ENCODE measurements at regions of chr4 and their contacts with region 1.

Region 1: DNA sequence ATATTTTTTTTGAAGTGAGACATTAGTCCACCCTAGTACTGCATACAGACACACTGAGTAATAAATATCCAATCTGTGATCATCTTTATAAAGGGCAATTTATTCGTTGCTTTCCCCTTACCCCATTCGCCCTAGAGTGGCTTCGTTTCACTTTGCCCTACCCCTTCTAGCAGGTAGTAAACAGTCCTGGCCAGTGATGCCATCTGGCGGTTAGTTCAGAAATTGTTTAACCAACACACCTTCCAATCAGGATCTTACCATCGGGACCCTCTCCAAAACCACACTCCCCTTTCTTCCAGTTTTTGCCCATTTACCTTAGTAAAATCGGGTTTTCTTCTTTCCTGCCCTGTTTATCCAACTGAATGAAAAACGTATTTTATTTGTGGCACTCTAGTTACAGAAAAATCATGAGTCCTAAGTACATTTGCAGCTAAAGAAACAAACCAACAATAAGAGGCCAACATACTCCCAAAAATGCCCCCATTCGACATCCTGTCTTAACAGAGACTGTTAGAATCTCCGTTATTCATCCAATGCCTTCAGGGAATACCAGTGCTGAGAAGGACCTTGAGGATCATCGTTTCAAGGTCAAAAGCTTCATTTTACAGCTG is 2.2 kb downstream of the PPA2 start:
- DNase-seq: peak; percentile 30 to 50
- ATAC-seq: peak; percentile 47 to 62 (median 54)
- H3K4me3 ChIP-seq: peak overlapping the region; percentile 85
- H3K27ac ChIP-seq: peak overlapping the region; percentile 94
- H3K4me1 ChIP-seq: peaks cover 19% of the 10 kb centered on the region
- H3K27me3 ChIP-seq: no peaks in the 10 kb centered on the region
- CTCF ChIP-seq: peak; percentile 74

Region 2: GRCh38 chr4:104930298-104930697 is 541.4 kb before region 1 on chr4:
- intact Hi-C with region 1: loop called in 1 of 2 experiments (anchors 10 kb)
- DNase-seq: no peak
- ATAC-seq: no peak
- H3K4me3 ChIP-seq: no peak overlapping the region
- H3K27ac ChIP-seq: no peak overlapping the region
- H3K4me1 ChIP-seq: no peaks in the 10 kb centered on the region
- H3K27me3 ChIP-seq: no peaks in the 10 kb centered on the region
- CTCF ChIP-seq: no peak

Region 3: GRCh38 chr4:105140684-105141490 is 330.8 kb before region 1 on chr4:
- intact Hi-C with region 1: loop called (anchors 2 kb)
- DNase-seq: no peak
- ATAC-seq: peak in 2 of 4 donors; percentile 67 to 78
- H3K4me3 ChIP-seq: no peak overlapping the region
- H3K27ac ChIP-seq: no peak overlapping the region
- H3K4me1 ChIP-seq: no peaks in the 10 kb centered on the region
- H3K27me3 ChIP-seq: no peaks in the 10 kb centered on the region
- CTCF ChIP-seq: peak; percentile 67

Region 4: GRCh38 chr4:105146276-105147015 is 325.2 kb before region 1 on chr4 and contains the start of gene TET2:
- intact Hi-C with region 1: loop called (anchors 2 kb)
- DNase-seq: peak; percentile 79 to 85
- ATAC-seq: peak; percentile 77 to 88 (median 82)
- H3K4me3 ChIP-seq: peak within 1 kb of the TSS; percentile 86
- H3K27ac ChIP-seq: peak within 1 kb of the TSS; percentile 84
- H3K4me1 ChIP-seq: peaks cover 24% of the 10 kb centered on the region
- H3K27me3 ChIP-seq: no peaks in the 10 kb centered on the region
- CTCF ChIP-seq: no peak
- total RNA-seq, gene TET2: 12.4 to 24.0 (median 15.4) TPM

Region 5: GRCh38 chr4:105191621-105192210 is 280.0 kb before region 1 on chr4:
- intact Hi-C with region 1: no loop called
- DNase-seq: no peak
- ATAC-seq: peak; percentile 71 to 87 (median 84)
- H3K4me3 ChIP-seq: no peak overlapping the region
- H3K27ac ChIP-seq: peak overlapping the region; percentile 4
- H3K4me1 ChIP-seq: peaks cover 35% of the 10 kb centered on the region
- H3K27me3 ChIP-seq: no peaks in the 10 kb centered on the region
- CTCF ChIP-seq: no peak

Region 6: DNA sequence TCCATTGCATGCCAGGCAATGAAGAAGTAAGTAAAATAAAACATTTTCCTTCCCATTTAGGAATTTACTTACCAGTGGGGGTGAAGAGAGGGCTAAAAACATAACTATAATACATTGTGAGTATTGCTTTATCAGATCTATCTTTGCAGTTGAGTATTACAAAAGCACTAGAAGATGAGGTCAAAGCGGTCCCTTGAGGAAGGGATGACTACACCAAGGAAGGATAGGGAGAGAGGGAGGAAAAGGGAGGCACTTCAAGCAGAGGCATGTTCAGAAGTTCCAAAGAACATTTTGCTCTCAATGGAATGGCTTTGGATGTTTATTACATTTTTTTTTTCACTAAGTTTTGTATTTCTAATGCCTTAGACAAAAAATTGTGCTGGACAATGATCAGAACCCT is 197.2 kb before region 1 on chr4:
- intact Hi-C with region 1: loop called in 1 of 2 experiments (anchors 10 kb)
- DNase-seq: no peak
- ATAC-seq: no peak
- H3K4me3 ChIP-seq: no peak overlapping the region
- H3K27ac ChIP-seq: no peak overlapping the region
- H3K4me1 ChIP-seq: no peaks in the 10 kb centered on the region
- H3K27me3 ChIP-seq: no peaks in the 10 kb centered on the region
- CTCF ChIP-seq: no peak

Region 7: GRCh38 chr4:105708530-105709391 is 237.1 kb after region 1 on chr4 and contains the starts of genes GSTCD and INTS12:
- intact Hi-C with region 1: loop called in 1 of 2 experiments (anchors 5 kb)
- DNase-seq: peak; percentile 91 to 95
- ATAC-seq: peak; percentile 97 to 99 (median 99)
- H3K4me3 ChIP-seq: peak within 1 kb of the TSS; percentile 95
- H3K27ac ChIP-seq: peak within 1 kb of the TSS; percentile 91
- H3K4me1 ChIP-seq: peaks cover 18% of the 10 kb centered on the region
- H3K27me3 ChIP-seq: no peaks in the 10 kb centered on the region
- CTCF ChIP-seq: no peak
- total RNA-seq, gene GSTCD: 2.6 to 6.6 (median 4.5) TPM
- total RNA-seq, gene INTS12: 17.7 to 28.8 (median 20.2) TPM

Region 8: GRCh38 chr4:105895583-105896460 is 424.2 kb after region 1 on chr4:
- intact Hi-C with region 1: no loop called
- DNase-seq: peak; percentile 34 to 61
- ATAC-seq: peak; percentile 80 to 84 (median 81)
- H3K4me3 ChIP-seq: peak overlapping the region; percentile 76
- H3K27ac ChIP-seq: no peak overlapping the region
- H3K4me1 ChIP-seq: no peaks in the 10 kb centered on the region
- H3K27me3 ChIP-seq: peaks cover 0 to 21% (median 0%) of the 10 kb centered on the region in 3 donors
- CTCF ChIP-seq: no peak